K562 (cell line): ENCODE measurements at regions of chr20 and their contacts with region 1.

Region 1: DNA sequence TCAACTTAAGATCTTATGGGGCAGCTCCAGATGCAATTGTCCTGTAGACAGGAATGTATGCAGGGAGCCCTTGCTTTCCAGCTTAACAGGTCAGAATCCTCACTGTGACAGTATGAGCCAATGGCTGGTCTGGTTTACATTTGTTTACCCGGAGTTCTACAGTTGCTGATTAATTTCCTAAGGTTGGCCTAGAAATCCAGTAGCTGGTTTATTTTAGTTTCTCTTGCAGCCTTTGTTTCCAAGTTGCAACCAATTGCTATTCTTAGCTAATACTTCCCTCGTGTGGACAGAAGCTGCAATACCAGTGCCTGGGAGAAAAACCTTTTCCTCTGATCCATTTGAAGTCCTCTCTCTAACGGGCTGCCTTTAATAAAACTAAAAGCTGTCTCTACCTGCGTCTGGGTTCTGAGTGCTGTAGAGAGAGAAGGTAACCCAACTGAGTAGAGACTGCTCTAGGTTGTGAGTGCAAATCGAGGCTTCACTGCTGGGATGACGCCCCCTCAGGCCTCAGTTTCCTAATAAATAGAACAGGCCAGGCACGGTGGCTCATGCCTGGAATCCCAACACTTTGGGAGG is 45.9 kb downstream of the ZNF217 start:
- DNase-seq: peak; percentile 38 to 70 (median 52)
- ATAC-seq: peak; percentile 86
- H3K4me3 ChIP-seq: no peak overlapping the region
- H3K27ac ChIP-seq: no peak overlapping the region
- H3K4me1 ChIP-seq: no peaks in the 10 kb centered on the region
- H3K27me3 ChIP-seq: no peaks in the 10 kb centered on the region
- CTCF ChIP-seq: peak; percentile 77 to 92 (median 81)
- EP300 ChIP-seq: no peak
- POLR2A ChIP-seq: no peak
- RAD21 ChIP-seq: peak; percentile 94 to 97

Region 2: GRCh38 chr20:52312132-52312729 is 1235.5 kb before region 1 on chr20:
- CTCF ChIA-PET with region 1: interaction called, 3 read pairs
- POLR2A ChIA-PET with region 1: no interaction called
- in situ Hi-C with region 1: no loop called
- intact Hi-C with region 1: loop called (anchors 10 kb)
- DNase-seq: peak; percentile 35 to 61 (median 51)
- ATAC-seq: peak; percentile 74
- H3K4me3 ChIP-seq: no peak overlapping the region
- H3K27ac ChIP-seq: no peak overlapping the region
- H3K4me1 ChIP-seq: no peaks in the 10 kb centered on the region
- H3K27me3 ChIP-seq: no peaks in the 10 kb centered on the region
- CTCF ChIP-seq: peak; percentile 63 to 69 (median 69)
- EP300 ChIP-seq: no peak
- POLR2A ChIP-seq: no peak
- RAD21 ChIP-seq: peak; percentile 68 to 69

Region 3: GRCh38 chr20:53208110-53208832 is 339.5 kb before region 1 on chr20:
- CTCF ChIA-PET with region 1: no interaction called
- POLR2A ChIA-PET with region 1: no interaction called
- in situ Hi-C with region 1: loop called (anchors 10 kb)
- intact Hi-C with region 1: loop called (anchors 5 kb)
- DNase-seq: peak; percentile 20 to 48 (median 32)
- ATAC-seq: peak; percentile 83
- H3K4me3 ChIP-seq: no peak overlapping the region
- H3K27ac ChIP-seq: no peak overlapping the region
- H3K4me1 ChIP-seq: peaks cover 0 to 2% of the 10 kb centered on the region in 2 experiments; a peak in 2 of 5 replicates
- H3K27me3 ChIP-seq: peaks cover 0 to 6% of the 10 kb centered on the region in 2 experiments; a peak in 1 of 5 replicates
- CTCF ChIP-seq: peak; percentile 62 to 68 (median 63)
- EP300 ChIP-seq: no peak
- POLR2A ChIP-seq: no peak
- RAD21 ChIP-seq: peak in 1 of 2 experiments; percentile 51; a peak in 2 of 4 replicates

Region 4: DNA sequence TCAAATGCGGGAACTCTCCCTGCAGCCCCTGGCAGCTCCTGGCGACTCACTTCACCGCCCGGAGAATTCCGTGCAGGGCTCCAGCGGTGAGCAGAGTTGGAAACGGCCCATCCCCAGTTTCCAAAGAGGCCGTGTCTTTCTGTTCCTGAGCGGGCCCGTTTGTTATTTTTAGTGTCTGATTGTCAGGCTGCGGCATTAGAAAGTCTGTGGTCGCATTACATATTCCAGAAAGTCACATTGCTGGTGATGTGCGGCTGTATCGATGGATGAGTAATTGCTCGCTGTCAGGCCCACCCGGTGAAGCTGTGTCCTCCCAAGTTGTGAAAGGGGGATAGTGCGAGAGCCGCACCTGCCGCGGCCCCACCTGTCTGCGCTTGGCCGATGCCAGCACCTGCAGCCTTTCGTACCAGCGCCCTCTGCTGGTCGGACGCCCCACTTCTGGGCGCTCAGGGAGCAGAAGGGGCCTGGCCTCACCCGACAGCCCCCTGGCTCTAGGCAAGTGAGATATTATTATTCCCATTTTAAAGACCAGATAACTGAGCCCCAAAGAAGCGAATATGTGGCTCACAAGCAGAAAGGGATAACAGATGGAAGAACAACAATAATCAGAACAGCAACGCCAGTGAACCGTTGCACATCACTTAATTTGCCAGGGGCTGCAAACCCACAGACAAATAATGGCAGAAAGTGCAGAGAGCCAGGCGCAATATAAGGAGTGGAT is 330.7 kb before region 1 on chr20:
- CTCF ChIA-PET with region 1: no interaction called
- POLR2A ChIA-PET with region 1: no interaction called
- in situ Hi-C with region 1: loop called (anchors 10 kb)
- intact Hi-C with region 1: no loop called
- DNase-seq: peak; percentile 72 to 83 (median 78)
- ATAC-seq: peak; percentile 99
- H3K4me3 ChIP-seq: no peak overlapping the region
- H3K27ac ChIP-seq: no peak overlapping the region
- H3K4me1 ChIP-seq: peaks cover under 1 to 5% of the 10 kb centered on the region in 2 experiments; a peak in 4 of 5 replicates
- H3K27me3 ChIP-seq: peaks cover 0 to 2% of the 10 kb centered on the region in 2 experiments; a peak in 2 of 5 replicates
- CTCF ChIP-seq: peak; percentile 81 to 91 (median 88)
- EP300 ChIP-seq: no peak
- POLR2A ChIP-seq: no peak
- RAD21 ChIP-seq: peak; percentile 80 to 89

Region 5: DNA sequence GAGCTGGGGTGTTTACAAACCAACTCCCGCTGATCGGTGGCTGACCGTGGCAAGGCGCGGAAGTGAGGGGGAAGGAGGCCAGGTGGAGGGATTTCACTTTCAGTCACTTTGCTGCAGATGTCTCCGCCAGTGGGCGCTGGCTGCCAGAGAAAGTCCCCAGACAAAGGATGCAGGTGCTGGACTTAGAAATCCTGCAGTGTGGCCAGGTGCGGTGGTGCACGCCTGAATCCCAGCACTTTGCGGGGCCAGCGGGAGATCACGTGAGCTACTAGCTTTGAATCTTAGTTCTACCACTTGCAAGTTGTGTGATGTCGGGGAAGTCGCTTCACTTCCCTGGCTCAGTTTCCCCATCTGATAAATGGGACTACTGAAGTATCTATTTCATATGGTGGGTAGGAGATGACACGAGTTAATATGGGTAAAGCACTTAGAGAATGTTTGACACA is 134.5 kb before region 1 on chr20:
- CTCF ChIA-PET with region 1: interaction called, 9 read pairs
- POLR2A ChIA-PET with region 1: no interaction called
- in situ Hi-C with region 1: loop called (anchors 5 kb)
- intact Hi-C with region 1: loop called (anchors 2 kb)
- DNase-seq: peak; percentile 61 to 67 (median 62)
- ATAC-seq: peak; percentile 88
- H3K4me3 ChIP-seq: no peak overlapping the region
- H3K27ac ChIP-seq: no peak overlapping the region
- H3K4me1 ChIP-seq: no peaks in the 10 kb centered on the region; a peak in 2 of 5 replicates
- H3K27me3 ChIP-seq: peaks cover 0 to 5% of the 10 kb centered on the region in 2 experiments; a peak in 4 of 5 replicates
- CTCF ChIP-seq: peak; percentile 77 to 91 (median 85)
- EP300 ChIP-seq: no peak
- POLR2A ChIP-seq: no peak
- RAD21 ChIP-seq: peak; percentile 66 to 83

Region 6: GRCh38 chr20:53643031-53643832 is 95.5 kb after region 1 on chr20:
- CTCF ChIA-PET with region 1: no interaction called
- POLR2A ChIA-PET with region 1: no interaction called
- in situ Hi-C with region 1: no loop called
- intact Hi-C with region 1: no loop called
- DNase-seq: peak; percentile 37 to 75 (median 52)
- ATAC-seq: peak; percentile 83
- H3K4me3 ChIP-seq: no peak overlapping the region; the same call in 1 of the 2 replicates
- H3K27ac ChIP-seq: peak overlapping the region; percentile 95
- H3K4me1 ChIP-seq: peaks cover 23 to 25% of the 10 kb centered on the region in 2 experiments
- H3K27me3 ChIP-seq: no peaks in the 10 kb centered on the region
- CTCF ChIP-seq: no peak
- EP300 ChIP-seq: peak; percentile 60; the same call in 1 of the 2 replicates
- POLR2A ChIP-seq: no peak; the same call in none of the 2 replicates
- RAD21 ChIP-seq: peak in 1 of 2 experiments; percentile 9; a peak in 1 of 4 replicates

Region 7: GRCh38 chr20:54062812-54063280 is 515.1 kb after region 1 on chr20:
- CTCF ChIA-PET with region 1: no interaction called
- POLR2A ChIA-PET with region 1: interaction called, 3 read pairs
- in situ Hi-C with region 1: loop called (anchors 10 kb)
- intact Hi-C with region 1: no loop called
- DNase-seq: peak in 2 of 4 experiments; percentile 59 to 62
- ATAC-seq: peak; percentile 76
- H3K4me3 ChIP-seq: no peak overlapping the region
- H3K27ac ChIP-seq: no peak overlapping the region
- H3K4me1 ChIP-seq: peaks cover 16 to 25% of the 10 kb centered on the region in 2 experiments; a peak in 4 of 5 replicates
- H3K27me3 ChIP-seq: no peaks in the 10 kb centered on the region
- CTCF ChIP-seq: peak; percentile 60 to 85 (median 75)
- EP300 ChIP-seq: no peak
- POLR2A ChIP-seq: no peak
- RAD21 ChIP-seq: peak; percentile 82 to 85